ENCODE measurements at regions of chr10 and their contacts with region 1.

Region 1: GRCh38 chr10:110857265-110858158 is 14.2 kb upstream of the PDCD4 start:
- DNase-seq: peak; percentile 84
- H3K4me3 ChIP-seq: peak overlapping the region; percentile 11
- H3K27ac ChIP-seq: peak overlapping the region; percentile 91
- H3K4me1 ChIP-seq: peaks cover 75% of the 10 kb centered on the region
- CTCF ChIP-seq: no peak

Region 2: DNA sequence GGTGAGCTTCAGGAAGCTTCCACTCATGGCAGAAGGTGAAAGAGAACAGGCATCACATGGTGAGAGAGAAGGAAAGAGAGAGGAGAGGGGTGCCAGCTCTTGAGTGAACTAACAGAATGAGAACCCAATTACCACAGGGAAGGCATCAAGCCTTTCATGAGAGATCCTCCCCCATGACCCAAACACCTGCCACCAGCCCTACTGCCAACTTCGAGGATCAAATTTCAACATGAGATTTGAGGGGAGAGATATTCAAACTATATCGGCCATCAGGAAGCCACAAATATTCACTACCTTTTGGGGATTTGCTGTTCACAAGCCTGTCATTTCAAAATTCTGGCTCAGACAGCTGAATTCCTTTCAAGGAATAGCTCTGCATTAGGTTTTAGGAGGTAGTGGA is 512.9 kb before region 1 on chr10:
- CTCF ChIA-PET with region 1: no interaction called
- POLR2A ChIA-PET with region 1: no interaction called
- intact Hi-C with region 1: no loop called
- DNase-seq: no peak
- H3K4me3 ChIP-seq: no peak overlapping the region
- H3K27ac ChIP-seq: no peak overlapping the region
- H3K4me1 ChIP-seq: peaks cover 19% of the 10 kb centered on the region
- CTCF ChIP-seq: no peak

Region 3: GRCh38 chr10:110885932-110886674 is 28.6 kb after region 1 on chr10:
- CTCF ChIA-PET with region 1: no interaction called
- POLR2A ChIA-PET with region 1: interaction called, 12 read pairs
- intact Hi-C with region 1: no loop called
- DNase-seq: no peak
- H3K4me3 ChIP-seq: no peak overlapping the region
- H3K27ac ChIP-seq: no peak overlapping the region
- H3K4me1 ChIP-seq: peaks cover 17% of the 10 kb centered on the region
- CTCF ChIP-seq: no peak

Measured in OCI-LY7 (cell line).